ENCODE measurements at regions of chr3 and their contacts with region 1.

Region 1: DNA sequence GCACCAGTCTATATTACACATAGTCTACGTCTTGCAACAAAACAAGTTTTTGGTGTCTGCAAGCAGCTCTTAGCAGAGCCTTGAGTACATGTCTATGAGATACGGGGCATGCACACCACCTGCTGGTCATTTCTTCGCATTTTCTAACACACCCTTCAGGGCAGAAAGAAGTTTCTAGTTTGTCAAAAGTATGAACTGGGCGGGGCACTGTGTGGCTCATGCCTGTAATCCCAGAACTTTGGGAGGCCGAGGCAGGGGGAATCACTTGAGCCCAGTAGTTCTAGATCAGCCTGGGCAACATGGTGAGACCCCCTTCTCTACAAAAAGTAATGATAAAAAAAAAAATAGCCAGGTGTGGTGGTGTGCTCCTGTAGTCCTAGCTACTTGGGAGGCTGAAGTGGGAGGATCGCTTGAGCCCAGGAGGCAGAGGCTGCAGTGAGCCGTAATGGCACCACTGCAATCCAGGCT is 64.2 kb upstream of the ARL8B start:
- DNase-seq: peak; percentile 86 to 94 (median 91)
- H3K4me3 ChIP-seq: no peak overlapping the region
- H3K27ac ChIP-seq: no peak overlapping the region
- H3K4me1 ChIP-seq: peaks cover 10 to 50% (median 26%) of the 10 kb centered on the region in 4 experiments
- H3K27me3 ChIP-seq: no peaks in the 10 kb centered on the region

Region 2: DNA sequence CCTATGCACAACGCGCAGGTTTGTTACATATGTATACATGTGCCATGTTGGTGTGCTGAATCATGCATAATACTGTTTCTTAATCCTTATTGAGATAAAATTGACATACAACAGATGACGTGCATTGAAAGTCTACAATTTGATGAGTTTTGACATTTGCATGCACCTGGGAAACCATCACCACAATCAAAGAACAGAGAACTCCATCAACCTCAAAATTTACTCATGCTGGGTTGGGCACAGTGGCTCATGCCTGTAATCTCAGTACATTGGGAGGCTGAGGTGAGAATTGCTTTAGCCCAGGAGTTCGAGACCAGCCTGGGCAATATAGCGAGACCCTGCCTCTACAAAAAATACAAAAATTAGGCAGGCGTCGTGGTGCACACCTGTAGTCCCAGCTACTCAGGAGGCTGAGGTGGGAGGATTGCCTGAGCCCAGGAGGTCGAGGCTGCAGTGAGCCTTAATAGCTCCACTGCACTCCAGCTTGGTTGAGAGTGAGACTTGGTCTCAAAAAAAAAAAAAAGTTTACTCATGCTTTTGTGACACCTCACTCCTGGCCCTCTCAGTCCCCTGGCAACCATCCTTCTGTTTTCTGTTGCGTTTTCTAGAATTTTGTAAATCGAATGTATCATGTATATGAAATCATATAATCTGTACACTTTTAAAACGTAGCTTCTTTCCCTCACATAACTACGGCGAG is 22.0 kb before region 1 on chr3:
- CTCF ChIA-PET with region 1: interaction called, 70 read pairs
- POLR2A ChIA-PET with region 1: no interaction called
- DNase-seq: peak in 2 of 3 donors; percentile 40
- H3K4me3 ChIP-seq: no peak overlapping the region
- H3K27ac ChIP-seq: no peak overlapping the region
- H3K4me1 ChIP-seq: peaks cover 7 to 44% (median 27%) of the 10 kb centered on the region in 4 experiments
- H3K27me3 ChIP-seq: no peaks in the 10 kb centered on the region

Region 3: GRCh38 chr3:5068531-5069050 is 10.7 kb after region 1 on chr3:
- CTCF ChIA-PET with region 1: interaction called, 11 read pairs
- POLR2A ChIA-PET with region 1: interaction called, 3 read pairs
- DNase-seq: no peak
- H3K4me3 ChIP-seq: no peak overlapping the region
- H3K27ac ChIP-seq: no peak overlapping the region
- H3K4me1 ChIP-seq: no peaks in the 10 kb centered on the region
- H3K27me3 ChIP-seq: no peaks in the 10 kb centered on the region

Measured in common myeloid progenitor, CD34-positive (primary cell).